K562 (cell line): ENCODE measurements at regions of chr1 and their contacts with region 1.

Region 1: GRCh38 chr1:7646981-7647901 is 123.9 kb upstream of the VAMP3 start:
- DNase-seq: peak; percentile 68 to 95 (median 92)
- ATAC-seq: peak; percentile 94
- H3K4me3 ChIP-seq: no peak overlapping the region
- H3K27ac ChIP-seq: no peak overlapping the region
- H3K4me1 ChIP-seq: peaks cover 0 to 9% of the 10 kb centered on the region in 2 experiments; a peak in 1 of 5 replicates
- H3K27me3 ChIP-seq: peaks cover 22 to 59% of the 10 kb centered on the region in 2 experiments; a peak in 3 of 5 replicates
- CTCF ChIP-seq: peak; percentile 92 to 94 (median 92)
- EP300 ChIP-seq: no peak
- POLR2A ChIP-seq: no peak
- RAD21 ChIP-seq: peak; percentile 95 to 97

Region 2: DNA sequence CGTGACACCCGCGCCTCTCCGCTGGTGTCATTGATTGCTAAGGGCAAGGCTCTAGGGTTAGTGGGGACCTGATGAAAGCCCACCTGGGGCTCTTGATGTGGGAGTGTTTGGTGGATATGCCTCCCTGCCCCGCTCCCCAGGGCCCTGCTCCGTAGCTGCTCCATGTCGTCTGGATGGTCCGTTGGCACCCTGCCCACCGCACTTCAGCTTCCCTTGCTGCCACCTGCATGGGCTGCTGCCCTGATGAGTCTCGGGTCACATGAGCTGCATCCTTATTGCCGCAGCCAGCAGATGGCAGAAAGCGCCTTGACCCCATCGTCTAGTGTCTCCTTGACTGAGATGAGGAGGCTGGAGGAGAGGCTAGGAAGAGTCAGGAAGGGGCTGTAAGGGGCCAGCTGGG is 422.6 kb before region 1 on chr1:
- CTCF ChIA-PET with region 1: no interaction called
- POLR2A ChIA-PET with region 1: no interaction called
- in situ Hi-C with region 1: loop called (anchors 10 kb)
- intact Hi-C with region 1: loop called (anchors 5 kb)
- DNase-seq: peak in 1 of 4 experiments; percentile 28
- ATAC-seq: peak; percentile 57; the same call in 2 of the 3 replicates
- H3K4me3 ChIP-seq: no peak overlapping the region
- H3K27ac ChIP-seq: no peak overlapping the region
- H3K4me1 ChIP-seq: no peaks in the 10 kb centered on the region
- H3K27me3 ChIP-seq: peaks cover 8 to 60% of the 10 kb centered on the region in 2 experiments; a peak in 4 of 5 replicates
- CTCF ChIP-seq: peak; percentile 29 to 39 (median 39); a peak in 4 of 6 replicates
- EP300 ChIP-seq: no peak
- POLR2A ChIP-seq: no peak
- RAD21 ChIP-seq: peak in 1 of 2 experiments; percentile 36; a peak in 2 of 4 replicates

Region 3: DNA sequence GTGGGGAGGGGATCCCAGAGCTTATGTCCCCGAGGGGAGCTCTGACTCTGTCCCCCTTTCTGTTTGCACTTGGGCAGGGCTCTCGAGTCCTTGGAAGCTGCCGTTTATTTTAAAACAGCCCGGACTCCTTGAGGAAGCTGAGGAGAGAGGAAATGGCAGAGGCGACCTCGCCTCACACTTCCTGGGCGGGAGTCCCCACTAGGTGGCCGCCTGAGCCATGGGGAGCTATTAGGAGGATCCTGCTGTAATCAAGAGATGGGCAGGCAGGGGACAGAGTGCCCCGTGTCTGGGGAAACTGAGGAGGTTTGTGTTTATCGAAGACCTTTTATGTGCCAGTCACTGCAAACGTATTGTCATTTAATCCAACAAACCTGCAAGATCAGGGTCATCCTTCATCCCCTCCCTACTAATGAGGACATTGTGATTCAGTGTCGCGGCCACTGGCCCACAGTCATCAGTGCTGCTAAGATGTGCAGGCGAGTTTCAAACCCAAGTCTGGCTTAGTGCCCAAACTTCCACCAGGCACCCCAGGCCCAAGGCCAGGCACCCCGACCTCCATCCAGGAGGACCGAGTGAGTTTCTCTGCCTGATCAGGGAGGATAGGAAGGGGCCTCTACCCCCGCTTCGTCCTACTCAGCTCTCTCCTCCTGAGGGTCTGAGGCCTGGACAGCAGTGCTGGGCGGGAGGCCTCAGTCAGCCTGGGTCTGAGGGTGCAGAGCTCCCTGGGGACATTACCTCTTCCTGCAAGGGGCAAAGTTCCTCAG is 193.0 kb before region 1 on chr1:
- CTCF ChIA-PET with region 1: interaction called, 5 read pairs
- POLR2A ChIA-PET with region 1: no interaction called
- in situ Hi-C with region 1: no loop called
- intact Hi-C with region 1: loop called (anchors 10 kb)
- DNase-seq: peak in 3 of 4 experiments; percentile 31 to 42 (median 33)
- ATAC-seq: peak; percentile 77
- H3K4me3 ChIP-seq: no peak overlapping the region
- H3K27ac ChIP-seq: no peak overlapping the region
- H3K4me1 ChIP-seq: no peaks in the 10 kb centered on the region
- H3K27me3 ChIP-seq: peaks cover 26 to 81% of the 10 kb centered on the region in 2 experiments; a peak in 4 of 5 replicates
- CTCF ChIP-seq: peak; percentile 51 to 52 (median 51); a peak in 5 of 6 replicates
- EP300 ChIP-seq: no peak
- POLR2A ChIP-seq: no peak
- RAD21 ChIP-seq: peak; percentile 44 to 58

Region 4: GRCh38 chr1:7580923-7581753 is 66.1 kb before region 1 on chr1:
- CTCF ChIA-PET with region 1: interaction called, 3 read pairs
- POLR2A ChIA-PET with region 1: no interaction called
- in situ Hi-C with region 1: no loop called
- intact Hi-C with region 1: loop called (anchors 1 kb)
- DNase-seq: no peak
- ATAC-seq: no peak
- H3K4me3 ChIP-seq: no peak overlapping the region
- H3K27ac ChIP-seq: no peak overlapping the region
- H3K4me1 ChIP-seq: peaks cover 4 to 5% of the 10 kb centered on the region in 2 experiments; a peak in 4 of 5 replicates
- H3K27me3 ChIP-seq: peaks cover 6 to 76% of the 10 kb centered on the region in 2 experiments; a peak in 3 of 5 replicates
- CTCF ChIP-seq: no peak
- EP300 ChIP-seq: no peak
- POLR2A ChIP-seq: no peak
- RAD21 ChIP-seq: no peak

Region 5: GRCh38 chr1:7975212-7975865 is 328.1 kb after region 1 on chr1:
- CTCF ChIA-PET with region 1: no interaction called
- POLR2A ChIA-PET with region 1: no interaction called
- in situ Hi-C with region 1: no loop called
- intact Hi-C with region 1: no loop called
- DNase-seq: peak; percentile 83 to 87 (median 86)
- ATAC-seq: peak; percentile 100
- H3K4me3 ChIP-seq: no peak overlapping the region
- H3K27ac ChIP-seq: no peak overlapping the region
- H3K4me1 ChIP-seq: no peaks in the 10 kb centered on the region
- H3K27me3 ChIP-seq: no peaks in the 10 kb centered on the region
- CTCF ChIP-seq: peak; percentile 98 to 100 (median 99)
- EP300 ChIP-seq: no peak
- POLR2A ChIP-seq: no peak
- RAD21 ChIP-seq: peak; percentile 79 to 89